ENCODE measurements at regions of chr11 and their contacts with region 1.

Region 1: GRCh38 chr11:116386118-116386699 is 386.6 kb downstream of the BUD13 start:
- DNase-seq: no peak
- H3K4me3 ChIP-seq: no peak overlapping the region
- H3K27ac ChIP-seq: peak overlapping the region in 1 of 2 experiments; percentile 96; a peak in 2 of 4 replicates
- H3K4me1 ChIP-seq: peaks cover 0 to 53% of the 10 kb centered on the region in 2 experiments; a peak in 2 of 4 replicates
- H3K27me3 ChIP-seq: no peaks in the 10 kb centered on the region
- CTCF ChIP-seq: no peak
- EP300 ChIP-seq: no peak
- RAD21 ChIP-seq: no peak

Region 2: DNA sequence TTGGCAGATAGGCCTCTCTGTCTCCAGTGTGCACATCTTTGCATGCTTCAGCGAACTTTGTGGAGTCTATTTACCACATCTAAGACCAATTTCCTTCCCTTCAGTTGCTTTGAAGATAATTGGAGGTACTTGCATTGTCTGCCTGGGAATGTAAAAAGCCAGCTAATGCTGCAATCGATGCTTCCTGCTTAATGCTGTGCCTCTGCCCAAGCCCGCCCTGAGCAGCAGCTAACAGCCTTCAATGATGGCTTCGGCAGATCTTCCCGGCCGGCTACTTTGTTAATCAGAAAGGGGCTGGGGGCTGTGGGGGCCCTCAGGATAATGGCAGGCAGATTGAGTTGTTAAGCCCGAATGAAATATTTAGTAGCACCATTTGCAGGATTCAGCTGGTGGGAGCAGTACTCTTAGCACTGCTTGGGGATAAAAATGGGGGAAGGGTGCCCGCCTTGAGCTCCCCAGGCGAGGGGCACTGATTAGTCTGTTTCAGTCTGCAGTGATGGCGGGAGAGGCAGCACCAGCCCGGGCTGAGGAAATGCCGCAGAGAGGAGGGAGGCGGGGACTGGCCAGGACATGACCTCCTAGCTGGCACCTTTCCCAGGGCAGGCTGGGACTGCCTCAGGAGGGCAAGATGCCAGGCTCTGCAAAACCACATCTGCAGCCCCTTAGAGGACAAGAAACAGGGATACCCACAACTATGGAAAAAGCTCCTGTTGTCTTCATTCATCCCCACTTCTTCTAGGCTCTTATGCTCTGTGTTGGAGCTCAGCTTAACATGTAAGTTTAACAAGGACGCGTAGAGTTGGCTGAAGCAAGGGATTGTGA is 73.4 kb before region 1 on chr11:
- CTCF ChIA-PET with region 1: interaction called, 10 read pairs
- POLR2A ChIA-PET with region 1: interaction called, 33 read pairs
- DNase-seq: peak; percentile 88
- H3K4me3 ChIP-seq: peak overlapping the region in 1 of 2 experiments; percentile 38; a peak in 3 of 4 replicates
- H3K27ac ChIP-seq: peak overlapping the region; percentile 65 to 100
- H3K4me1 ChIP-seq: peaks cover 27 to 42% of the 10 kb centered on the region in 2 experiments
- H3K27me3 ChIP-seq: no peaks in the 10 kb centered on the region
- CTCF ChIP-seq: no peak
- EP300 ChIP-seq: peak; percentile 65 to 73; a peak in 3 of 4 replicates
- RAD21 ChIP-seq: no peak; the same call in none of the 2 replicates

Region 3: DNA sequence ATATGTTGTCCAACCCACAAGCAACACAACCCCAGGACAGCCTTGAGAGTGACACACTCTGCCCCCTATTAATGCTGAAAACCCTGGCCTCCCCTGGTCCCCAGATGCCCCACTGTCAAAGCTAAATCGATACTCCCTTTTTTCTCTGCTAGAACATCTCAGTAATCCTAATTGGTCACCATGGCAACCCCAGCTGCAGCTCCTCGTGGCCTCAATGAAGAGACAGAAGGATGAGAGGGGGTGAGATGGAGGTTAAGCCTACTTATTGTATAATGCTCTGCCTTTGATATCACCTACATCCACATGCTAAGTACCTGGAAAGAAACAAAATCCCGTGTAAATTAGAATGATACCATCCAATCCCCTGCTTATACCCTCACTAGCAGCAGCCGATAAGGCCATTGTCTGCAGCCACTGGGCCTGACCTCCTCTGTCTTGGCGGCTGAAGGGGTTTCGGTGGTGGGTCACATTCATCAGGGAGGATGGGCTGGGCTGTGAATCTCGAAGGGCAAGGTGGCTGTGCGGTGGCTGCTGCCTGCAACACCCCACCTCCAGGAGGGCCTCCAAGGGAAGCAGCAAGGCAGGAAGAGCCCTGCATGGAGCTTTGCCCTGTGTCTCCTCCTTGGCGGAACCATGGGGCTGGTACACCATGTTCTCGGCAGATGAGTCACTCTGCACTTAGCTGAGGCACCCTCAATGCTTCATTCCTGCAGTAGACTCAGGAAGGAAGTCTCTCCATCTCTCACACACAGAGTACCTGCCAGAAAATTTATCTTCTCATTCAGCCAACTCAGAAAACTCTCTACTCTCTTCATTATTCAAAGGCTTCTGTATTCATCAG is 12.9 kb before region 1 on chr11:
- CTCF ChIA-PET with region 1: interaction called, 16 read pairs
- POLR2A ChIA-PET with region 1: interaction called, 48 read pairs
- DNase-seq: no peak
- H3K4me3 ChIP-seq: no peak overlapping the region
- H3K27ac ChIP-seq: peak overlapping the region in 1 of 2 experiments; percentile 97; a peak in 2 of 4 replicates
- H3K4me1 ChIP-seq: peaks cover 0 to 47% of the 10 kb centered on the region in 2 experiments; a peak in 2 of 4 replicates
- H3K27me3 ChIP-seq: no peaks in the 10 kb centered on the region
- CTCF ChIP-seq: no peak
- EP300 ChIP-seq: no peak
- RAD21 ChIP-seq: no peak

Region 4: GRCh38 chr11:116420770-116421528 is 34.7 kb after region 1 on chr11:
- CTCF ChIA-PET with region 1: interaction called, 12 read pairs
- POLR2A ChIA-PET with region 1: interaction called, 30 read pairs
- DNase-seq: no peak
- H3K4me3 ChIP-seq: no peak overlapping the region
- H3K27ac ChIP-seq: peak overlapping the region in 1 of 2 experiments; percentile 100; a peak in 2 of 4 replicates
- H3K4me1 ChIP-seq: peaks cover 0 to 71% of the 10 kb centered on the region in 2 experiments; a peak in 2 of 4 replicates
- H3K27me3 ChIP-seq: no peaks in the 10 kb centered on the region
- CTCF ChIP-seq: no peak
- EP300 ChIP-seq: no peak
- RAD21 ChIP-seq: no peak

Region 5: GRCh38 chr11:116454020-116454645 is 67.9 kb after region 1 on chr11:
- CTCF ChIA-PET with region 1: interaction called, 3 read pairs
- POLR2A ChIA-PET with region 1: interaction called, 12 read pairs
- DNase-seq: peak; percentile 37
- H3K4me3 ChIP-seq: no peak overlapping the region
- H3K27ac ChIP-seq: peak overlapping the region in 1 of 2 experiments; percentile 99; a peak in 2 of 4 replicates
- H3K4me1 ChIP-seq: peaks cover 0 to 46% of the 10 kb centered on the region in 2 experiments; a peak in 1 of 4 replicates
- H3K27me3 ChIP-seq: no peaks in the 10 kb centered on the region
- CTCF ChIP-seq: peak; percentile 62
- EP300 ChIP-seq: no peak
- RAD21 ChIP-seq: peak; percentile 80